Ovary (tissue), 10 donors: ENCODE measurements at regions of chr9 and their contacts with region 1.

Region 1: GRCh38 chr9:134171316-134172197 is 7.2 kb upstream of the RNU6ATAC start:
- DNase-seq: peak in 4 of 5 donors; percentile 84 to 87 (median 87)
- H3K4me3 ChIP-seq: no peak overlapping the region
- H3K27ac ChIP-seq: peak overlapping the region in 1 of 2 donors; percentile 83
- H3K4me1 ChIP-seq: peaks cover 25% of the 10 kb centered on the region
- H3K27me3 ChIP-seq: no peaks in the 10 kb centered on the region
- CTCF ChIP-seq: no peak
- EP300 ChIP-seq: no peak
- POLR2A ChIP-seq: peak; percentile 17

Region 2: DNA sequence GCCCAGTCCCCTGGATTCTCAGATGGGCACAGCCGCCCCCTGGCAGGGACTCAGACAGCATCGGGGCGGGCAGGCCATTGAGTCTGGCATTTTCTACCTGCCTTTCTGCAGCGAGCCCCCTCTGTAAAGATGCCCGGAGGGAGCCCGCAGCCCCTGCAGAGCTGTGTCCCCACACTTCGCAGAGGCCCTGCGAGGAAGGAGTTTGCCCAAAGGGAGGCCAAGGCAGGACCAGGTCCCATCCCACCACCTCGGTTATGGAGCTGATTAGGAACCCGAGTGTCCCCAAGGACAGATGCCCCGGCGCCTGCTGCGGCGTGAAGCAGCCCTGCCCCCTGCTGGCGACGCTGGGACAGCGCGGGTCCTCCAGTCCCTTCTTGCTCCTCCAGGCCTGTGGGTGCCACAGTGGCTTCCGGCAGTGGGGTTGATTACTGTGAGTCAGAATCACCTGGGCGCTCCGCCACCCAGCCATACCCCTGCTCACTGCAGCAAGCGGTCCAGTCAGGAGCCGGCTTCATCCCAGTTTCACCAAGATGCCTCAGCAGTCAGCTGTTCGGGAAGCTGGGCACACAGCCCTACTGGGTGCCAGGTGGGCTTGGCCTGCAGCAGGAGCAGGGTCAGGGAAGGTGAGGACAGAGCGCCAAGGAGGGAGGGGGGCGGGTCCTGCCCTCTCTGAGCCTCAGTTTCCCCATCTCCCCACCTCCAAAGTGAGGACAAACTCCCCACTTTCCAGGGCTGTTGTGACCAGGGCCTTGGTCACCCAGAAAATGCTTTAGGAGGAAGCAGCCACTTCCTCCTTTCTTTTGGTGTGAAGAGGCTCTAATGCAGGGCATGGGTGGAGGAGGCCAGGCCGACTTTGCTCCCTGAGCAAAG is 271.8 kb after region 1 on chr9:
- intact Hi-C with region 1: loop called (anchors 1 to 2 kb)
- DNase-seq: peak; percentile 78 to 89 (median 86)
- H3K4me3 ChIP-seq: no peak overlapping the region
- H3K27ac ChIP-seq: no peak overlapping the region
- H3K4me1 ChIP-seq: peaks cover 18% of the 10 kb centered on the region
- H3K27me3 ChIP-seq: no peaks in the 10 kb centered on the region
- CTCF ChIP-seq: peak; percentile 99
- EP300 ChIP-seq: no peak
- POLR2A ChIP-seq: no peak